Activated T-helper 1 cell treated with anti-CD3 and anti-CD28 coated beads, Interleukin-12 subunit alpha, Interleukin-12 subunit beta, Interleukin-2, Interleukin-4 antibody, amounts not matched to agents 30 ng/mL and 10 ng/mL and 1 ng/mL, durations not matched to agents 14 hours and 24 hours and 36 hours (primary cell): ENCODE measurements at regions of chr11 and their contacts with region 1.

Region 1: DNA sequence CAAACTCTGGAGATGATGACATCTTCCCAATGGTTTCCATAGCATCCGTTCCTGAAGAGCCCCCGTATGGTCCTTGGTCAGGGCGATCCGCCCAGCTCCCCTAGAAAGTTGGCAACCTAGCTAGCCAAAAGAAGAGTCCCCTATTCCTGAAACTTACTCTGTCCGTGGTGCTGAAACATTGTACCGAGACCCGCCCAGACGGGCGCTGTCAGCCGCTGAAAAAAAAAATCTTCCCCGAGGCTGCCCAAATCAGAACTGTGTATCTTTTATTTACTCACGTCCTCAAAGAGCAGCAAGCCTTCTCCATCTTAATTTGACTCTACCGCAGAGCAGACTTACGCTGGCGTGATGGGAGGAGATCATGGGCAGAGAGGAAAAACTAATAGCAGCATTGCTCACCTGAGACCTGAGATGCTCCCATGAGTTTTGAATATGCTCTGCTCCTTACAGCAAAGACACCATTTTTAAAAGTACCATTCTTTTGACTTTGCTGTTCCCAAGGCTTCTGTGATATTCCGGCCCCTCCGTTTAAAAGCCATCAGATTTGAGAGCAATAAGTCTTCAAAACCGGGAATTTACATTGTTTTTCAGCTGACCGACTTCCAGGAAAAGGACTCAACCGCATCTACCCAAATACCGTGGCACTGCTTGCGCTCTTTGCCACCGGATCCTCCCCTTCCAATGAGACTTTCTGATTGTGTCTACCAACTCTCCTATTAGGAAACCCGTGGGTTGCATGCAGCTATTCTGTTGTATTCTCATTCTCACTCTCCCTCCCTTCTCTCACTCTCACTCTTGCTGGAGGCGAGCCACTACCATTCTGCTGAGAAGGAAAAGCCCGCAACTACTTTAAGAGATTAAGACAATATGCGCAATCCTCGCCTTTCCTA is at the start of gene SLC17A6:
- DNase-seq: no peak
- H3K4me3 Mint-ChIP-seq: no peak within 1 kb of the TSS
- H3K27ac Mint-ChIP-seq: no peak within 1 kb of the TSS
- H3K4me1 Mint-ChIP-seq: peaks cover 5% of the 10 kb centered on the region
- H3K27me3 Mint-ChIP-seq: peaks cover 51% of the 10 kb centered on the region
- total RNA-seq, gene SLC17A6: not detected in 2 replicates

Region 2: GRCh38 chr11:22730319-22730718 is 392.5 kb after region 1 on chr11:
- intact Hi-C with region 1: loop called (anchors 2 kb)
- DNase-seq: no peak
- H3K4me3 Mint-ChIP-seq: no peak overlapping the region
- H3K27ac Mint-ChIP-seq: no peak overlapping the region
- H3K4me1 Mint-ChIP-seq: no peaks in the 10 kb centered on the region
- H3K27me3 Mint-ChIP-seq: peaks cover 6% of the 10 kb centered on the region